OCI-LY7 (cell line): ENCODE measurements at regions of chr22 and their contacts with region 1.

Region 1: DNA sequence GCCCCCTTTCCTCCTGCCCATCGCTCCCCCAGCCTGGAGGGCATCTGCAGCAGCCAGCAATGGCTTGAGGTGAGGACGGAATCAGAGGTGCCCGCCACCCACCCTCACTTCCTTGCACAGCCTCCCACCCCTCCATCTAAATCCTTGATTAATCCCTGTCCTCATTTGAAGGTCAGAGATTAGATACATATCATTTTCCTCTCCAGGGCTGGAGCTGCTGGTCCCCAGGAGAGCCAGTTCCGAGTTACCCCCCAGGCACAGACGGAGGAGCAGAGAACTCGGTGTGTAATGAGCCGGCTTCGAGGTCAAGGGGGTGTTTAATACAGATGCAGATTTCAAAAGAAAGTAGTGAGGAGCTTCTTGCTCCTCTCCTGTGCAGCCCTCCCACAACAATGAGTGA is 542.1 kb downstream of the MN1 start:
- DNase-seq: no peak
- H3K4me3 ChIP-seq: no peak overlapping the region
- H3K27ac ChIP-seq: no peak overlapping the region
- H3K4me1 ChIP-seq: peaks cover 5% of the 10 kb centered on the region
- CTCF ChIP-seq: no peak

Region 2: DNA sequence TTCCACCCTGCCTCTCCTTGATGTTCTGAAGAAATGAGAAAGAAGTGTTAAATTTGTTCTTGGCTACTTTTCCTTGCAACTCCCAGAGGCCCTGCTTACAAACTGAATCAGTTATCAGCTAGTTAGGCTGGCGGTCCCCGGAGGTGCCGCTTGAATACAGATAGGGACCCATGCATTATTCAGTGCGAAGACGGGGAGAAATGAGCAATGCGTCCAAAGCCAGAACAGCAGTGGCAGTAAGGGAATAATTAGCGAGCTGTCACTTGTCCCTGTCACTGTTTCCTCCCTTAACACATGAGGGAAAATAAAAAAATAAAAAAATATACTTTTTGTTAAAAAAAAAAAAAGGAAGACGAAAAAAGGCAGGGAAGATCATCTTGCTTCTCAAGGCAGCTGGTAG is 14.0 kb after region 1 on chr22:
- CTCF ChIA-PET with region 1: interaction called, 12 read pairs
- POLR2A ChIA-PET with region 1: no interaction called
- intact Hi-C with region 1: no loop called
- DNase-seq: no peak
- H3K4me3 ChIP-seq: no peak overlapping the region
- H3K27ac ChIP-seq: no peak overlapping the region
- H3K4me1 ChIP-seq: no peaks in the 10 kb centered on the region
- CTCF ChIP-seq: no peak

Region 3: GRCh38 chr22:27546157-27546935 is 286.9 kb after region 1 on chr22:
- CTCF ChIA-PET with region 1: no interaction called
- POLR2A ChIA-PET with region 1: no interaction called
- intact Hi-C with region 1: no loop called
- DNase-seq: no peak
- H3K4me3 ChIP-seq: no peak overlapping the region
- H3K27ac ChIP-seq: no peak overlapping the region
- H3K4me1 ChIP-seq: no peaks in the 10 kb centered on the region
- CTCF ChIP-seq: no peak